A549 (cell line): ENCODE measurements at regions of chr10 and their contacts with region 1.

Region 1: GRCh38 chr10:125868372-125868975 is 12.6 kb downstream of the DHX32 start:
- DNase-seq: peak; percentile 28 to 74
- ATAC-seq: peak; percentile 73 to 87; a peak in 4 of 6 replicates
- H3K4me3 ChIP-seq: no peak overlapping the region
- H3K27ac ChIP-seq: no peak overlapping the region
- H3K4me1 ChIP-seq: 0 out of 3 replicates have a peak, but pooled peaks cover 4% of the 10 kb centered on the region
- CTCF ChIP-seq: peak; percentile 88
- EP300 ChIP-seq: no peak
- POLR2A ChIP-seq: no peak
- RAD21 ChIP-seq: peak; percentile 89 to 90

Region 2: GRCh38 chr10:125707541-125708468 is 160.7 kb before region 1 on chr10:
- CTCF ChIA-PET with region 1: no interaction called
- POLR2A ChIA-PET with region 1: no interaction called
- DNase-seq: peak; percentile 50 to 80
- ATAC-seq: peak; percentile 87 to 96
- H3K4me3 ChIP-seq: no peak overlapping the region
- H3K27ac ChIP-seq: peak overlapping the region; percentile 58 to 76; a peak in 5 of 6 replicates
- H3K4me1 ChIP-seq: peaks cover 27% of the 10 kb centered on the region
- CTCF ChIP-seq: no peak
- EP300 ChIP-seq: no peak
- POLR2A ChIP-seq: no peak
- RAD21 ChIP-seq: no peak

Region 3: GRCh38 chr10:125878957-125879835 is 10.7 kb after region 1 on chr10:
- CTCF ChIA-PET with region 1: interaction called, 17 read pairs
- POLR2A ChIA-PET with region 1: no interaction called
- DNase-seq: peak; percentile 75 to 86
- ATAC-seq: peak; percentile 97 to 98
- H3K4me3 ChIP-seq: no peak overlapping the region
- H3K27ac ChIP-seq: peak overlapping the region; percentile 67 to 79; a peak in 5 of 6 replicates
- H3K4me1 ChIP-seq: peaks cover 42% of the 10 kb centered on the region
- CTCF ChIP-seq: no peak
- EP300 ChIP-seq: no peak
- POLR2A ChIP-seq: no peak
- RAD21 ChIP-seq: no peak

Region 4: DNA sequence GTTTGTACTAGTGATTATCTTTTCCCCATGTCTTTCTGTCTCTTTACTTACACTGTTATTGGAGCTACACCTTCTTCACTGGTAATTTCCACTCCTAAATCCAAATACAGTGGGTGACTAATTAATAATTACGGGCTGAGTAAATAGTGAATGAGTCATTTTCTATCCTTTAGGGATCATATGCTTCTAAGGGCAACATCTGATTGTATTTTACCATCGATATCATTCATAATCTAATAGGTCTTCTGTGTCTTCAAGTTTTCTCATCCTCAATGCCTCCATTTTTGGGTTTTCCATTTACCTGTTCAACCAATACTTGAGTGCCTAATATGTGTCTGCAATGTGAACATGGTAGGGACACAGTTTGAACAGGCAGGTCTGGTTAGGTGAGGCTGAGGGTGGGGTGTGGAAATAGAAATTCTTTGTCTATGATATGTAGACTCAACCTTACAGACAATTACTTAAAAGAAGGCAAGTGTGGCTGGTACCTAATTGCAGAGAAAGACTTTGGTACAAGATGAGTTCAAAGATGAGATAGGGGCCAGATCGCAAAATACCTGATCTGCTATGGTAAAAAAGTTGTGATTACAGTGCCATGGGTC is 18.5 kb after region 1 on chr10:
- CTCF ChIA-PET with region 1: interaction called, 17 read pairs
- POLR2A ChIA-PET with region 1: interaction called, 8 read pairs
- DNase-seq: no peak
- ATAC-seq: no peak
- H3K4me3 ChIP-seq: no peak overlapping the region
- H3K27ac ChIP-seq: no peak overlapping the region
- H3K4me1 ChIP-seq: peaks cover 44% of the 10 kb centered on the region
- CTCF ChIP-seq: no peak
- EP300 ChIP-seq: no peak
- POLR2A ChIP-seq: no peak
- RAD21 ChIP-seq: no peak

Region 5: DNA sequence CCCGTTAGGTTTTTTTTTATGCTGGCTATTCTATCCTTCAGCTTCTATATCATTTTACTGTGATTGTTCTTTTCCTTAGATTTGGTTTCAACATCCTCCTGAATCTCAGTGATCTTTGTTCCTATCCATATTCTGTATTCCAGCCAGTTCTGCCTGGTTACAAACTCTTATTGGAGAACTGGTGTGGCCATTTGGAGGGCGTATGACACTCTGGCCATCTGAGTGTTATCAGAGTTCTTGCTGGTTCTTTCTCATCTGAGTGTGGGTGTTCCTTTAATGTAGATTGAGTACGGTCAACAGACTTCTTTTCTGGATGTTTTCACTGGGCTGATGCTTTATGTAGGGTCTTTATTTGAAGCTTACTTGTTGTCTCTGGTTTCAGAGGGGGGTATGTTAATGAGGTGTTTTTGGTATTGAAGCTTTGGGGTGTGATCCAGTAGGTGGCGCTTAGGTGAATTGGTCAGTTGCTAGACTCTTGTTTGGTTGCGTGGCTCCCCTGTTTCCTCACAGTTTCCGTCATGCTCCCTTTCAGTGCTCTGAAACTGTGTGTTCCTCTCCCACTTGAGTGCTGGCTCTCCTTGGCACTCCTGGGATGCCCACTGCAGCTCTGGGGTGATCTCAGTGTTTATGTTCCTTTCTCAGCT is 108.6 kb after region 1 on chr10:
- CTCF ChIA-PET with region 1: interaction called, 13 read pairs
- POLR2A ChIA-PET with region 1: no interaction called
- DNase-seq: no peak
- ATAC-seq: no peak
- H3K4me3 ChIP-seq: no peak overlapping the region
- H3K27ac ChIP-seq: peak overlapping the region in 1 of 2 experiments; percentile 24; a peak in 2 of 6 replicates
- H3K4me1 ChIP-seq: peaks cover 18% of the 10 kb centered on the region
- CTCF ChIP-seq: no peak
- EP300 ChIP-seq: no peak
- POLR2A ChIP-seq: no peak
- RAD21 ChIP-seq: no peak

Region 6: DNA sequence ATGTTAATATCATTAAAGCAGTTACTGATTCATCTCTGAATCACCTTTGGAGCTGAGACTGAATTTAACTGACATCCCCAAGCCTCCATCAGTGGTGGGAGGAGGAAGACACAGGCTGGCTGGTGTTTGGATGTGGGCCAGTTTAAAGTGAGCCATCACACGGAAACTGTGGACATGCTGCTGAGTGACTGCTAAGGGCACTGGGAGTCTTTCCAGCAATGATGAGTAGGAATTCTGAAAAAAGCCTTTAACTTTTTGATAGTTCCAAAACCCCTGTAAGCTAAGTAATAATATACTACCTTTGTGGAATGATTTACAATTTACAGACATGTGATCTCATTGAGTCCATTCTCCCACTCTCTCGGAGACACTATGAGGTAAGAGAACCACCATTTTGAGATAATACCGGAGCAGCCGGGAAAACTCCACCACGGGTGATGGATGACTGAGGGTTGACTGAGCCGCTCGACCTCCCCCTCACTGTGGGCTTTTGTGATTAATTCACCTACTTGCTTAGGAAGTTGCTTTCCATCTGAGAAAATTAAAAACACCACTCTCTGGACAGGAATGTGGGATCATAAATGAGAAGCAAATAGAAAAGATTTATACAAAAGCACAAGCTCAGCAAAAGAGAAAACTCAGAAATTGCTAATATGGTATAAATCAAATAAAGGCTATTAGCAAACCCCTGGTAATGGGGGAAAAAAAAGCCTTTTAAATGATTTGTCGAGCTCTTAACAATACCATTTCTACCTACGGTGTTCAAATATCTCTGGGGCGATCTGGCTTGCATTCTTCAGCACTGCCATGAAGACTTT is 222.6 kb after region 1 on chr10:
- CTCF ChIA-PET with region 1: no interaction called
- POLR2A ChIA-PET with region 1: no interaction called
- DNase-seq: peak; percentile 64 to 72
- ATAC-seq: peak; percentile 87
- H3K4me3 ChIP-seq: no peak overlapping the region
- H3K27ac ChIP-seq: peak overlapping the region; percentile 69 to 71
- H3K4me1 ChIP-seq: peaks cover 7% of the 10 kb centered on the region; the same call in 1 of the 3 replicates
- CTCF ChIP-seq: no peak
- EP300 ChIP-seq: peak in 1 of 2 experiments; percentile 37; a peak in 1 of 5 replicates
- POLR2A ChIP-seq: no peak
- RAD21 ChIP-seq: no peak